ENCODE measurements at regions of chr3 and their contacts with region 1.

Region 1: GRCh38 chr3:156323466-156323865 is 203.1 kb downstream of the KCNAB1 start:
- DNase-seq: no peak
- ATAC-seq: no peak
- H3K4me3 ChIP-seq: no peak overlapping the region
- H3K27ac ChIP-seq: no peak overlapping the region
- H3K4me1 ChIP-seq: no peaks in the 10 kb centered on the region
- H3K27me3 ChIP-seq: no peaks in the 10 kb centered on the region
- CTCF ChIP-seq: no peak

Region 2: GRCh38 chr3:156341831-156342416 is 18.5 kb after region 1 on chr3:
- intact Hi-C with region 1: loop called (anchors 2 kb)
- DNase-seq: no peak
- ATAC-seq: no peak
- H3K4me3 ChIP-seq: no peak overlapping the region
- H3K27ac ChIP-seq: no peak overlapping the region
- H3K4me1 ChIP-seq: no peaks in the 10 kb centered on the region
- H3K27me3 ChIP-seq: no peaks in the 10 kb centered on the region
- CTCF ChIP-seq: no peak

Region 3: DNA sequence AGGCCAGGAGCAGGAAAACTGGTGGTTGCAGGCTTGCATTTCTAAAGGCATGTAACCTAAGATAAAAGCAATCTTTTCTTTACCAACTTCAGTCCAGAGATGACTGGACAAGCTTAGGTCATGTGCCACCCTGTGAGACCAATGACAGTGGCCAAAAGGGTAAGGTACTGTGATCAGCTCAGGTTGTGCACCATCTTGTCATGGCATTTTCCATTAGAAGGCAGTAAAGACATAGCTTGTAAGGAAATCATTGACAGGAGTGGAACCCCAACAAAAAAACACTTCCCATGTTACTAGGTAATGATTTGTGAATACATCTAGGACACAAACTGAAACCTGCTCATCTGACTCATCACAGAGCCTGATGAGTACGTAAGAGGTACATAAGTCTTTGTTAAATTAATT is 196.3 kb after region 1 on chr3:
- intact Hi-C with region 1: no loop called
- DNase-seq: no peak
- ATAC-seq: no peak
- H3K4me3 ChIP-seq: no peak overlapping the region
- H3K27ac ChIP-seq: no peak overlapping the region
- H3K4me1 ChIP-seq: no peaks in the 10 kb centered on the region
- H3K27me3 ChIP-seq: no peaks in the 10 kb centered on the region
- CTCF ChIP-seq: no peak